Calu3 (cell line): ENCODE measurements at regions of chr2 and their contacts with region 1.

Region 1: GRCh38 chr2:137838255-137839092 is 125.8 kb upstream of the HNMT start:
- DNase-seq: no peak
- H3K4me3 Mint-ChIP-seq: no peak overlapping the region
- H3K27ac Mint-ChIP-seq: no peak overlapping the region
- H3K4me1 Mint-ChIP-seq: peaks cover 8% of the 10 kb centered on the region
- H3K27me3 Mint-ChIP-seq: no peaks in the 10 kb centered on the region
- CTCF ChIP-seq: no peak

Region 2: GRCh38 chr2:136874258-136874657 is 964.2 kb before region 1 on chr2:
- CTCF ChIA-PET with region 1: no interaction called
- intact Hi-C with region 1: loop called (anchors 5 kb)
- DNase-seq: peak; percentile 12
- H3K4me3 Mint-ChIP-seq: no peak overlapping the region
- H3K27ac Mint-ChIP-seq: no peak overlapping the region
- H3K4me1 Mint-ChIP-seq: no peaks in the 10 kb centered on the region
- H3K27me3 Mint-ChIP-seq: no peaks in the 10 kb centered on the region
- CTCF ChIP-seq: no peak

Region 3: GRCh38 chr2:137467246-137467862 is 371.1 kb before region 1 on chr2:
- CTCF ChIA-PET with region 1: interaction called, 7 read pairs
- intact Hi-C with region 1: loop called (anchors 1 kb)
- DNase-seq: peak; percentile 62
- H3K4me3 Mint-ChIP-seq: no peak overlapping the region
- H3K27ac Mint-ChIP-seq: no peak overlapping the region
- H3K4me1 Mint-ChIP-seq: no peaks in the 10 kb centered on the region
- H3K27me3 Mint-ChIP-seq: no peaks in the 10 kb centered on the region
- CTCF ChIP-seq: no peak

Region 4: DNA sequence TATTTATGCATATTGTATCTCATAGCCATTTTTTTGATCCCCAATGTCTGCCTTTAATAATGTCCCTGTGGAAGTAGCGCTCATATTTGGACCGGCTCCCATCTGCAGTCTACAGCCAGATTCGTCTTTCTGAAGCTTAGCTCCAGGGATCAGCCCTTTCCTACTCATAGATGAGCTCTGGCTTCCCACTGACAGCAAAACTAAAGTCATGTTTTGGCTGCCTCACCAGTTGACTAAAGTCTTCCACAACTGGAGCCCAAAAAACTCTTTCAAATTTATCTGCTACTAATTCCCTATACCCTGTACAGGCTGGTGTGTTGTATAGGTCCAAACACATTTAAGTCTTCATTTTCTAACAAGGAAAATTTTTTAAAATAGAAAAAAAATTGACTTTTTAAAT is 168.4 kb before region 1 on chr2:
- CTCF ChIA-PET with region 1: interaction called, 11 read pairs
- intact Hi-C with region 1: loop called (anchors 5 kb)
- DNase-seq: no peak
- H3K4me3 Mint-ChIP-seq: no peak overlapping the region
- H3K27ac Mint-ChIP-seq: no peak overlapping the region
- H3K4me1 Mint-ChIP-seq: peaks cover under 1% of the 10 kb centered on the region
- H3K27me3 Mint-ChIP-seq: no peaks in the 10 kb centered on the region
- CTCF ChIP-seq: no peak